ENCODE measurements at regions of chr1 and their contacts with region 1.

Region 1: DNA sequence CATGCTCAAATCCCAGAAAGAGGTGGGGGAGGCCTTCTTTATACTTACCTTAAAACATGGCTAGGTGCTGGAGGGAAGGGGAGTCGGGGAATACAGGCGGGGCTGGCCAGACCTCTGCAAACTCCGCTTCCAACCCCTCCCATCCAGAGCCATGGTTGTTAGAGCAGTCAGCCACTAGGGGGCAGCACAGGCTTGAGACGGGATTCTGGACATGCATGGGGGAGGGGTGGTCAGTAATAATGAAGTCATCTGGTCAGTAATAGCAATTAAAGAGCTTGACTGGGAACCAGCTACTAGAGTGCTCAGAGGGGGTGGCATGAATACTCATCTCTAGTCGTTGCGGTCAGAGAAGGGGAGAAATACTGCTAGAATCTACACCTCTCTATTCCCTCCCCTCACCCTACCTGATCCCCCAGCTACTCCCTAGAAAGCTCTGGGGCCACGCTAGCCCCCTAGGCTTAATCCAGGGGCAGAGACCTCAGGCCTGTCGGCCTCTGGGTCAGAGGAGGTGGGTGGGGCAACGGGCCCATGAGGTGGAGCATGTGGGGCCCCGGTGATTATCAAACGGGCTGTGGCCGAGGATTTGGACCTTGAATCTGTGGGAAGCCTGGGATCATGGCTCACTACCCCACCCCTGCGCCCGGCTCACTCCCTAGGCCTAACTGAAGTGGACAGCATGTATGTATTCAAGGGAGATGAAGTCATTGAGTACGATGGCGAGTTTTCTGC is 2.9 kb downstream of the CASQ1 start:
- DNase-seq: peak; percentile 68 to 78
- ATAC-seq: peak; percentile 75 to 89
- H3K4me3 ChIP-seq: no peak overlapping the region
- H3K27ac ChIP-seq: peak overlapping the region; percentile 43 to 61; a peak in 5 of 6 replicates
- H3K4me1 ChIP-seq: peaks cover 18% of the 10 kb centered on the region
- CTCF ChIP-seq: peak; percentile 92
- EP300 ChIP-seq: no peak
- POLR2A ChIP-seq: no peak
- RAD21 ChIP-seq: peak; percentile 92 to 95

Region 2: DNA sequence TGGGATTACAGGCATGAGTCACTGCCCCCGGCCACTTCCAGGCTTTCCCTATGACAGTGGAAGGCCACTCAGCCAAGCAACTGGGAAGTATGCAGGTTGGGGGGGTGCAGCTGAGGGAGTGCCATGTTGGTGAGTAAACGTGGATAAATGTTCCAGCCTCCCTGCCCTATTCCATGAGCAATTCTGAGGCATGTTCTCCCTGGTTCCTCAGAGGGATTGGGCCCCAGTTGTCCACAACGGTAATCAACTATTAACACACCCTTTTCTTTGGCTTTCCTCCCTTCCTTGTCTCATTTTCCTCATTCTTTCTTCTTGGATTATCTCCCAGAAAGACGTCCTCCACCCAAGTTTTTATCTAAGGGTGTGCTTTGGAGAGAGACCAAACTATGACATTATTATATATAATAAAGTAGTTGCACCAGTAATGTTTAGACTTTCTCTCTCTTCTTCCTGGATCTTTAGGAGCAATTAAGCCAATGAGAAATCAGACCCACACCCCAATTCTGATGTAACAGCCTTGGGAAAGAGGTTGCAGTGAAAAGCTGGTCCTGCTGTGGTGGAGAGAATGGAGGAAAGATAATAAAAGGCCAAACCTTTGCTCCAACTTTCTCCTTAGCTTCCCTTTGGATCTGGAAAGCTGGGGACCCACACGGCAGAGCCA is 232.4 kb before region 1 on chr1:
- CTCF ChIA-PET with region 1: no interaction called
- POLR2A ChIA-PET with region 1: no interaction called
- DNase-seq: peak in 1 of 2 experiments; percentile 62
- ATAC-seq: peak; percentile 50 to 78; a peak in 5 of 6 replicates
- H3K4me3 ChIP-seq: no peak overlapping the region
- H3K27ac ChIP-seq: 0 out of 6 replicates have a peak overlapping the region, but pooled peaks of 1 of the 2 experiments have one; percentile 21
- H3K4me1 ChIP-seq: no peaks in the 10 kb centered on the region
- CTCF ChIP-seq: no peak
- EP300 ChIP-seq: no peak
- POLR2A ChIP-seq: no peak
- RAD21 ChIP-seq: no peak

Region 3: GRCh38 chr1:160124705-160125478 is 68.4 kb before region 1 on chr1:
- CTCF ChIA-PET with region 1: interaction called, 15 read pairs
- POLR2A ChIA-PET with region 1: no interaction called
- DNase-seq: peak; percentile 90 to 94
- ATAC-seq: peak; percentile 82 to 86
- H3K4me3 ChIP-seq: no peak overlapping the region
- H3K27ac ChIP-seq: peak overlapping the region; percentile 85 to 93
- H3K4me1 ChIP-seq: peaks cover 54% of the 10 kb centered on the region
- CTCF ChIP-seq: peak; percentile 40
- EP300 ChIP-seq: peak; percentile 82 to 89; a peak in 3 of 5 replicates
- POLR2A ChIP-seq: no peak
- RAD21 ChIP-seq: peak; percentile 23 to 64; a peak in 3 of 5 replicates

Region 4: GRCh38 chr1:160205242-160206035 is 12.2 kb after region 1 on chr1 and contains the start of gene PEA15:
- CTCF ChIA-PET with region 1: interaction called, 86 read pairs
- POLR2A ChIA-PET with region 1: no interaction called
- DNase-seq: peak; percentile 60 to 87
- ATAC-seq: peak; percentile 72 to 81
- H3K4me3 ChIP-seq: peak within 1 kb of the TSS; percentile 88
- H3K27ac ChIP-seq: peak within 1 kb of the TSS; percentile 89 to 96
- H3K4me1 ChIP-seq: peaks cover 45% of the 10 kb centered on the region
- CTCF ChIP-seq: no peak
- EP300 ChIP-seq: no peak
- POLR2A ChIP-seq: peak; percentile 20; the same call in 1 of the 2 replicates
- RAD21 ChIP-seq: no peak
- polyA plus RNA-seq, gene PEA15: 115 and 130 TPM in 2 replicates

Region 5: DNA sequence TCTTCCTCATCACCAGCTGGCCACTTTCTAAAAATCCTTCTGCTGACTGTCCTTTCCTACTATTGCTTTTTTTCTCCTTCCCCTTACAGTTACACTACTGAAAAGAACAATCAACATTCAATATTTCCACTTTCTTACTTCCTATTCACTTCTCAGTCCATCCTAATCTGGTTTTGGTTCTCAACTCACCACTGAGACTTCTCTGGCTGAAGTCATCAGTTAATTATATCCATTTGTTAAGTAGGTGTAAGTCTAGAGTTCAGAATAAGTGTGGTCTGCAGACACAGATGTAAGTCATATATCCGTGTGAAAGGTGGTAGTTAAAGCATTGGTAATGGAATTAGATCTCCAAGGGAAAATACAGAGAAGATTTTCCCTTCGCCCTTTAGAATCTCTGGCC is 33.4 kb after region 1 on chr1:
- CTCF ChIA-PET with region 1: interaction called, 108 read pairs
- POLR2A ChIA-PET with region 1: interaction called, 4 read pairs
- DNase-seq: no peak
- ATAC-seq: no peak
- H3K4me3 ChIP-seq: no peak overlapping the region
- H3K27ac ChIP-seq: no peak overlapping the region
- H3K4me1 ChIP-seq: no peaks in the 10 kb centered on the region
- CTCF ChIP-seq: no peak
- EP300 ChIP-seq: no peak
- POLR2A ChIP-seq: no peak
- RAD21 ChIP-seq: no peak

Region 6: GRCh38 chr1:160244209-160244608 is 51.0 kb after region 1 on chr1:
- CTCF ChIA-PET with region 1: interaction called, 12 read pairs
- POLR2A ChIA-PET with region 1: no interaction called
- DNase-seq: no peak
- ATAC-seq: no peak
- H3K4me3 ChIP-seq: no peak overlapping the region
- H3K27ac ChIP-seq: no peak overlapping the region
- H3K4me1 ChIP-seq: peaks cover 16% of the 10 kb centered on the region
- CTCF ChIP-seq: no peak
- EP300 ChIP-seq: no peak
- POLR2A ChIP-seq: no peak
- RAD21 ChIP-seq: no peak

Region 7: DNA sequence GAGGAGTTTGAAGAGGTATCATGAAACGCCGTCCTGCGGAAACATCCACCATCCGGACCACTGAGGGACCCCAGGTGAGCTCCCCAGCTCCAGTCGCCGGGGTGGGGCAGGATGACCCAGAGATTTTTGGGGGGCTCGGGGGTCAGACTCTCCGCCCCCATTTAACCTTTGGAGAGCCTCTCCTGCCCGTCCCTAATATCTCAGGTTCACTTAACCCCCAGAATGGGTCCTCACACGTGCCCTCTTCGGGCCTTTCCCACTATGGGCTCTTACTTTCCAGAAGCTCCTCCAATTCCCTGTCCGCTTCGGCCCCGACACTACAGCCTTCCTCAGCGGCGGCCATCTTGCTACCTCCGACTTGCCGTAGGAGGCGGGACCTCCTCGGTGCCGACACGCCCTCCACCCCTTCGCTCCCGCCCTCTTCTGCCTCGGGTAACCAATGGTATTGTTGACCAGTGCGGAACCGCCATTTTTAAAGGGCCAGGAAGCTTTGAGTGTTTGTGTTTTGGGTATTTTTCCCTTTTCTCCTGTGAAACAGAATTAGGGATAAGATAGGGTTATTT is 91.6 kb after region 1 on chr1 and contains the start of gene PEX19:
- CTCF ChIA-PET with region 1: interaction called, 81 read pairs
- POLR2A ChIA-PET with region 1: no interaction called
- DNase-seq: peak; percentile 95 to 97
- ATAC-seq: peak; percentile 98 to 99
- H3K4me3 ChIP-seq: peak within 1 kb of the TSS; percentile 91
- H3K27ac ChIP-seq: peak within 1 kb of the TSS; percentile 93 to 95
- H3K4me1 ChIP-seq: peaks cover 6% of the 10 kb centered on the region
- CTCF ChIP-seq: no peak
- EP300 ChIP-seq: no peak
- POLR2A ChIP-seq: peak; percentile 89
- RAD21 ChIP-seq: no peak
- polyA plus RNA-seq, gene PEX19: 54.3 and 56.7 TPM in 2 replicates